ENCODE measurements at regions of chr20 and their contacts with region 1.

Region 1: GRCh38 chr20:6492271-6493055 is 275.0 kb upstream of the BMP2 start:
- DNase-seq: peak; percentile 74 to 84
- H3K4me3 ChIP-seq: no peak overlapping the region
- H3K4me3 Mint-ChIP-seq: peak overlapping the region; percentile 6
- H3K27ac Mint-ChIP-seq: peak overlapping the region; percentile 87
- H3K4me1 ChIP-seq: peaks cover 54% of the 10 kb centered on the region
- H3K4me1 Mint-ChIP-seq: peaks cover 54% of the 10 kb centered on the region
- H3K27me3 ChIP-seq: no peaks in the 10 kb centered on the region
- H3K27me3 Mint-ChIP-seq: no peaks in the 10 kb centered on the region
- CTCF ChIP-seq: no peak

Region 2: DNA sequence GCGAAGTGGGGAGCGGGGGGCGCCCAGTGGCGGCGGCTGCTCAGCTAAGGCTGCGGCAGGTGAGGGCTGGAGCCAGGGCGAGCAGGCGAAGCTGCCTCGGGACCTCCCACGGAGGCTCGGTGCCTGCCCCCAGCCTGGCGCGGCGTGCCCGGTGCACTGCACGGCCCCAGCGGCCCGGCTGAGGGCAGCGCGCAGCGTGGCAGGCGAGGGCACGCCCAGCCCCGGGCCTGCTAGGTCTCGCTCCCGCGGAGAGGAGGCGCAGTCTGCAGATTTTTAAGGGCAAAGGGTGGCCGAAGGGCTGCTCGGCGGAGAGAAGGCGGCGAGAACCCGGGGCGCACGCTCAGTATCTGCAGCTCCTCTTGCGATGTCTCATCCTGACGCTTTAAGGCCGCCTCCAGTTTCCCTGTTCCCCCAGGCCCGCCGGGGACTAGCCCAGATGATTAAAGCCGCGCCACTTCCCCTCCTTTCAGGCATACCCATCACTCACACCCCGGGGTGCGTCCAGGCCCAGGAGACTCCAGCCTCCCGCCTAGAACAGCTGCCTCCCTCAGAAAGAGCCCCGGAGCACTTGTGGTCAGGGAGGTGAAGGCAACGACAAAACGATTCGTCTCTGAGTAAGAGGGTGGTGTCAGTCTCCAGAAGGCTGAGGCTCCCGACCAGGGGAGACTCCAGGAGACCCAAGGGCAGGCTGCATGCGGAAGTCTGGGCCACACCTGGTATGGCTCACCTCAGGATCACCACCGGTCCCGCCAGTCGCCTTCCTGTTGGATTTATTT is 369.4 kb before region 1 on chr20 and contains the start of gene FERMT1:
- CTCF ChIA-PET with region 1: no interaction called
- POLR2A ChIA-PET with region 1: no interaction called
- intact Hi-C with region 1: loop called (anchors 5 kb)
- DNase-seq: peak; percentile 90
- H3K4me3 ChIP-seq: peak within 1 kb of the TSS; percentile 48
- H3K4me3 Mint-ChIP-seq: peak within 1 kb of the TSS; percentile 84
- H3K27ac Mint-ChIP-seq: peak within 1 kb of the TSS; percentile 92
- H3K4me1 ChIP-seq: peaks cover 27% of the 10 kb centered on the region
- H3K4me1 Mint-ChIP-seq: peaks cover 23% of the 10 kb centered on the region
- H3K27me3 ChIP-seq: no peaks in the 10 kb centered on the region
- H3K27me3 Mint-ChIP-seq: no peaks in the 10 kb centered on the region
- CTCF ChIP-seq: peak in 1 of 2 experiments; percentile 30
- total RNA-seq, gene FERMT1: 30.1 and 34.7 TPM in 2 replicates

Region 3: GRCh38 chr20:6381887-6382286 is 110.6 kb before region 1 on chr20:
- CTCF ChIA-PET with region 1: no interaction called
- POLR2A ChIA-PET with region 1: no interaction called
- intact Hi-C with region 1: loop called (anchors 2 kb)
- DNase-seq: peak; percentile 50 to 56
- H3K4me3 ChIP-seq: no peak overlapping the region
- H3K4me3 Mint-ChIP-seq: no peak overlapping the region
- H3K27ac Mint-ChIP-seq: no peak overlapping the region
- H3K4me1 ChIP-seq: peaks cover 5% of the 10 kb centered on the region; the same call in 1 of the 2 replicates
- H3K4me1 Mint-ChIP-seq: peaks cover 7% of the 10 kb centered on the region
- H3K27me3 ChIP-seq: no peaks in the 10 kb centered on the region
- H3K27me3 Mint-ChIP-seq: peaks cover 3% of the 10 kb centered on the region
- CTCF ChIP-seq: peak; percentile 60 to 82

Region 4: GRCh38 chr20:6533761-6534479 is 41.5 kb after region 1 on chr20:
- CTCF ChIA-PET with region 1: no interaction called
- POLR2A ChIA-PET with region 1: no interaction called
- intact Hi-C with region 1: loop called (anchors 2 kb)
- DNase-seq: no peak
- H3K4me3 ChIP-seq: no peak overlapping the region
- H3K4me3 Mint-ChIP-seq: no peak overlapping the region
- H3K27ac Mint-ChIP-seq: no peak overlapping the region
- H3K4me1 ChIP-seq: peaks cover 6% of the 10 kb centered on the region; the same call in 1 of the 2 replicates
- H3K4me1 Mint-ChIP-seq: peaks cover 6% of the 10 kb centered on the region
- H3K27me3 ChIP-seq: no peaks in the 10 kb centered on the region
- H3K27me3 Mint-ChIP-seq: no peaks in the 10 kb centered on the region
- CTCF ChIP-seq: no peak

Region 5: GRCh38 chr20:6575912-6576401 is 83.5 kb after region 1 on chr20:
- CTCF ChIA-PET with region 1: no interaction called
- POLR2A ChIA-PET with region 1: no interaction called
- intact Hi-C with region 1: loop called (anchors 5 kb)
- DNase-seq: peak; percentile 26 to 52
- H3K4me3 ChIP-seq: no peak overlapping the region
- H3K4me3 Mint-ChIP-seq: peak overlapping the region; percentile 46
- H3K27ac Mint-ChIP-seq: no peak overlapping the region
- H3K4me1 ChIP-seq: peaks cover 20% of the 10 kb centered on the region
- H3K4me1 Mint-ChIP-seq: peaks cover 15% of the 10 kb centered on the region
- H3K27me3 ChIP-seq: no peaks in the 10 kb centered on the region
- H3K27me3 Mint-ChIP-seq: peaks cover 3% of the 10 kb centered on the region
- CTCF ChIP-seq: no peak

Region 6: DNA sequence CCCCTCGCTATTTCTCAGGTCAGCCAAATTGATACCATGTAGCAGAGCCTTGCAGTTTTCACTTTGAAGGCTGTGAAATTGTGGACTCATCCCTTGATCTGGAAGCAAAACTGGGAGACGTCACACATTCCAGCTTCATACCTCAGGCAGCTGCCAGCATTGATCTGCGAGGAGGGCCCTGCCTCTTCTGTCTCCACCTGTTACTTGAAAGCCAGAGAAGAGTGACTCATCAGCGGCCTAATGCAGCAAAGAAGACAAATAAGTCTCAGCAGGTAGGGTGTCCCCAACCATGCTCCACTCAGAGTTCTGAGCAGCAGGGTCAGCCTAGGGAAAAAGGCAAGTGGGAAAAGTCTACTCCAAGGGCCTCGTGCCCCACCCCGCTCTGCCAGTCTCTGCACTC is 205.6 kb after region 1 on chr20:
- CTCF ChIA-PET with region 1: no interaction called
- POLR2A ChIA-PET with region 1: no interaction called
- intact Hi-C with region 1: loop called (anchors 2 kb)
- DNase-seq: peak; percentile 93 to 97
- H3K4me3 ChIP-seq: no peak overlapping the region
- H3K4me3 Mint-ChIP-seq: peak overlapping the region; percentile 50
- H3K27ac Mint-ChIP-seq: peak overlapping the region; percentile 99
- H3K4me1 ChIP-seq: peaks cover 85% of the 10 kb centered on the region
- H3K4me1 Mint-ChIP-seq: peaks cover 77% of the 10 kb centered on the region
- H3K27me3 ChIP-seq: no peaks in the 10 kb centered on the region
- H3K27me3 Mint-ChIP-seq: no peaks in the 10 kb centered on the region
- CTCF ChIP-seq: no peak

Region 7: DNA sequence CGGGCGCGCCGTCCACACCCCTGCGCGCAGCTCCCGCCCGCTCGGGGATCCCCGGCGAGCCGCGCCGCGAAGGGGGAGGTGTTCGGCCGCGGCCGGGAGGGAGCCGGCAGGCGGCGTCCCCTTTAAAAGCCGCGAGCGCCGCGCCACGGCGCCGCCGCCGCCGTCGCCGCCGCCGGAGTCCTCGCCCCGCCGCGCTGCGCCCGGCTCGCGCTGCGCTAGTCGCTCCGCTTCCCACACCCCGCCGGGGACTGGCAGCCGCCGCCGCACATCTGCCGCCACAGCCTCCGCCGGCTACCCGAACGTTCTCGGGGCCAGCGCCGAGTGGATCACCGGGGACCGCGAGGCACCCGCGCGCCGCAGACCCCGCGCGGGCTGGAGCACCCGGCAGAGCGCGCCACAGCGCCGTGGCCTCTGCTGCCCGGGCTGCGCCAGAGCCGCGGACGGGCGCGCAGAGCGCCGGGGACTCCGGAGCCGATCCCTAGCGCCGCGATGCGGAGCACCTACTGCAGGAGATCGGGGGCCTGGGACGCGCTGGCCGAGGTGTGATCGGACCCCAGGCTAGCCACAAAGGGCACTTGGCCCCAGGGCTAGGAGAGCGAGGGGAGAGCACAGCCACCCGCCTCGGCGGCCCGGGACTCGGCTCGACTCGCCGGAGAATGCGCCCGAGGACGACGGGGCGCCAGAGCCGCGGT is 275.2 kb after region 1 on chr20 and contains the start of gene BMP2:
- CTCF ChIA-PET with region 1: no interaction called
- POLR2A ChIA-PET with region 1: no interaction called
- intact Hi-C with region 1: loop called (anchors 5 kb)
- DNase-seq: peak; percentile 63 to 79
- H3K4me3 ChIP-seq: peak within 1 kb of the TSS; percentile 96
- H3K4me3 Mint-ChIP-seq: peak within 1 kb of the TSS; percentile 92
- H3K27ac Mint-ChIP-seq: peak within 1 kb of the TSS; percentile 53
- H3K4me1 ChIP-seq: peaks cover 21% of the 10 kb centered on the region
- H3K4me1 Mint-ChIP-seq: peaks cover 33% of the 10 kb centered on the region
- H3K27me3 ChIP-seq: no peaks in the 10 kb centered on the region
- H3K27me3 Mint-ChIP-seq: no peaks in the 10 kb centered on the region
- CTCF ChIP-seq: no peak
- total RNA-seq, gene BMP2: 24.3 and 27.3 TPM in 2 replicates

Measured in Caco-2 (cell line).